K562 (cell line): ENCODE measurements at regions of chr7 and their contacts with region 1.

Region 1: DNA sequence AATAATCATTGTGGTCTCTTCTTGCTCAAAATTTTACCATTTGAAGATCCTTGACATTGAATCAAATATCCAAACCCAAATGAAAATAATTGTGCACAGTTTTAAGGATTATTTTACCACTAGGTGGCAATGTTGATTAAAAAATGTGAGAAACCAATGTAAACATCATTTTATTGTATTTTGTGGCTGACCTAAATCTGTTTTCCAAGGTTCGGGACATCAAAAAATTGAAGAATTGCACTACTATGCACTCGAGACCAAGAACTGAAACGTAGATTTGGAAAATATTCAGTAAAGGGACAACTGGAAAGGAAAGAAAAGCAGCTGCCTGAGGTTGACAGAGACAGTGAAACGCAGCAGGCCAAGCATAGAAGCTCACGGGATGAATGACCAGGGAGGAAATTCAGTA is 259.3 kb downstream of the SNX13 start:
- DNase-seq: peak in 1 of 4 experiments; percentile 18
- ATAC-seq: peak; percentile 54; the same call in 1 of the 3 replicates
- H3K4me3 ChIP-seq: no peak overlapping the region
- H3K27ac ChIP-seq: no peak overlapping the region
- H3K4me1 ChIP-seq: no peaks in the 10 kb centered on the region; a peak in 1 of 5 replicates
- H3K27me3 ChIP-seq: no peaks in the 10 kb centered on the region
- CTCF ChIP-seq: peak in 2 of 3 experiments; percentile 13 to 57; a peak in 3 of 6 replicates
- EP300 ChIP-seq: no peak
- POLR2A ChIP-seq: no peak
- RAD21 ChIP-seq: peak; percentile 74 to 81

Region 2: GRCh38 chr7:16982640-16983350 is 698.2 kb before region 1 on chr7:
- CTCF ChIA-PET with region 1: no interaction called
- POLR2A ChIA-PET with region 1: no interaction called
- in situ Hi-C with region 1: no loop called
- intact Hi-C with region 1: loop called (anchors 10 kb)
- DNase-seq: peak; percentile 20 to 33 (median 28)
- ATAC-seq: no peak
- H3K4me3 ChIP-seq: no peak overlapping the region
- H3K27ac ChIP-seq: no peak overlapping the region
- H3K4me1 ChIP-seq: no peaks in the 10 kb centered on the region
- H3K27me3 ChIP-seq: no peaks in the 10 kb centered on the region
- CTCF ChIP-seq: peak; percentile 59 to 83 (median 78)
- EP300 ChIP-seq: no peak
- POLR2A ChIP-seq: no peak
- RAD21 ChIP-seq: peak; percentile 89 to 90

Region 3: DNA sequence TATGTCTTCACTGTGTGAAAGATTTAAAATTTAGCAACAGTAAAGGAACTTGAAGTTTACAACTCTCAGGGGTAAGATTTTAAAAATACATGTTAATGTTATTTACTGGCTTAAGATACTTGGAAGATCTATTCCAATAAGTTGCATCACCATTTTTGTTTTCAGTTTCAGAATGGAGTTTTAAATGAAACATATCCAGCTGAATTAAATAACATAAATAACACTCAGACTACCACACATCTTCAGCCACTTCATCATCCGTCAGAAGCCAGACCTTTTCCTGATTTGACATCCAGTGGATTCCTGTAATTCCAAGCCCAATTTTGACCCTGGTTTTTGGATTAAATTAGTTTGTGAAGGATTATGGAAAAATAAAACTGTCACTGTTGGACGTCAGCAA is 338.2 kb before region 1 on chr7:
- CTCF ChIA-PET with region 1: no interaction called
- POLR2A ChIA-PET with region 1: no interaction called
- in situ Hi-C with region 1: no loop called
- intact Hi-C with region 1: no loop called
- DNase-seq: no peak
- ATAC-seq: no peak
- H3K4me3 ChIP-seq: no peak overlapping the region
- H3K27ac ChIP-seq: no peak overlapping the region
- H3K4me1 ChIP-seq: no peaks in the 10 kb centered on the region
- H3K27me3 ChIP-seq: no peaks in the 10 kb centered on the region
- CTCF ChIP-seq: no peak
- EP300 ChIP-seq: no peak
- POLR2A ChIP-seq: no peak
- RAD21 ChIP-seq: no peak

Region 4: GRCh38 chr7:17663061-17663675 is 17.8 kb before region 1 on chr7:
- CTCF ChIA-PET with region 1: no interaction called
- POLR2A ChIA-PET with region 1: no interaction called
- in situ Hi-C with region 1: no loop called
- intact Hi-C with region 1: no loop called
- DNase-seq: no peak
- ATAC-seq: no peak
- H3K4me3 ChIP-seq: no peak overlapping the region
- H3K27ac ChIP-seq: no peak overlapping the region
- H3K4me1 ChIP-seq: no peaks in the 10 kb centered on the region
- H3K27me3 ChIP-seq: peaks cover 0 to 8% of the 10 kb centered on the region in 2 experiments; a peak in 1 of 5 replicates
- CTCF ChIP-seq: no peak
- EP300 ChIP-seq: no peak
- POLR2A ChIP-seq: no peak
- RAD21 ChIP-seq: no peak

Region 5: GRCh38 chr7:18666107-18666728 is 985.3 kb after region 1 on chr7:
- CTCF ChIA-PET with region 1: no interaction called
- POLR2A ChIA-PET with region 1: no interaction called
- in situ Hi-C with region 1: no loop called
- intact Hi-C with region 1: loop called (anchors 2 kb)
- DNase-seq: peak; percentile 37 to 59 (median 47)
- ATAC-seq: peak; percentile 72; the same call in 2 of the 3 replicates
- H3K4me3 ChIP-seq: no peak overlapping the region
- H3K27ac ChIP-seq: no peak overlapping the region
- H3K4me1 ChIP-seq: no peaks in the 10 kb centered on the region
- H3K27me3 ChIP-seq: no peaks in the 10 kb centered on the region
- CTCF ChIP-seq: peak; percentile 54 to 78 (median 54)
- EP300 ChIP-seq: no peak
- POLR2A ChIP-seq: no peak
- RAD21 ChIP-seq: peak; percentile 45 to 68

Region 6: GRCh38 chr7:19665399-19666008 is 1984.6 kb after region 1 on chr7:
- CTCF ChIA-PET with region 1: interaction called, 4 read pairs
- POLR2A ChIA-PET with region 1: no interaction called
- in situ Hi-C with region 1: no loop called
- intact Hi-C with region 1: loop called (anchors 5 kb)
- DNase-seq: peak; percentile 15 to 35 (median 28)
- ATAC-seq: peak; percentile 63; the same call in 1 of the 3 replicates
- H3K4me3 ChIP-seq: no peak overlapping the region
- H3K27ac ChIP-seq: no peak overlapping the region
- H3K4me1 ChIP-seq: no peaks in the 10 kb centered on the region; a peak in 1 of 5 replicates
- H3K27me3 ChIP-seq: no peaks in the 10 kb centered on the region
- CTCF ChIP-seq: peak; percentile 21 to 67 (median 32); a peak in 4 of 6 replicates
- EP300 ChIP-seq: no peak
- POLR2A ChIP-seq: no peak
- RAD21 ChIP-seq: peak; percentile 63 to 68

Region 7: GRCh38 chr7:19677180-19677579 is 1996.2 kb after region 1 on chr7:
- CTCF ChIA-PET with region 1: no interaction called
- POLR2A ChIA-PET with region 1: no interaction called
- in situ Hi-C with region 1: loop called (anchors 25 kb)
- intact Hi-C with region 1: no loop called
- DNase-seq: no peak
- ATAC-seq: no peak
- H3K4me3 ChIP-seq: no peak overlapping the region
- H3K27ac ChIP-seq: peak overlapping the region; percentile 62; the same call in 2 of the 3 replicates
- H3K4me1 ChIP-seq: peaks cover 0 to 13% of the 10 kb centered on the region in 2 experiments; a peak in 1 of 5 replicates
- H3K27me3 ChIP-seq: no peaks in the 10 kb centered on the region
- CTCF ChIP-seq: no peak
- EP300 ChIP-seq: peak; percentile 68
- POLR2A ChIP-seq: no peak
- RAD21 ChIP-seq: peak in 1 of 2 experiments; percentile 19; a peak in 1 of 4 replicates